ENCODE measurements at regions of chr9 and their contacts with region 1.

Region 1: GRCh38 chr9:105157130-105157583 is 87.3 kb upstream of the SLC44A1 start:
- DNase-seq: peak; percentile 95
- H3K4me3 ChIP-seq: no peak overlapping the region
- H3K27ac ChIP-seq: peak overlapping the region; percentile 56 to 79 (median 70)
- H3K4me1 ChIP-seq: peaks cover 0 to 18% (median 16%) of the 10 kb centered on the region in 4 donors
- H3K27me3 ChIP-seq: no peaks in the 10 kb centered on the region
- CTCF ChIP-seq: peak in 3 of 4 experiments; percentile 36 to 58 (median 36)
- EP300 ChIP-seq: peak; percentile 27 to 93 (median 83)
- POLR2A ChIP-seq: no peak

Region 2: GRCh38 chr9:104863180-104863883 is 293.8 kb before region 1 on chr9:
- intact Hi-C with region 1: loop called (anchors 5 kb)
- DNase-seq: no peak
- H3K4me3 ChIP-seq: no peak overlapping the region
- H3K27ac ChIP-seq: peak overlapping the region; percentile 8 to 79 (median 67)
- H3K4me1 ChIP-seq: peaks cover 0 to 79% (median 75%) of the 10 kb centered on the region in 4 donors
- H3K27me3 ChIP-seq: no peaks in the 10 kb centered on the region
- CTCF ChIP-seq: peak in 3 of 4 experiments; percentile 62 to 70 (median 67)
- EP300 ChIP-seq: no peak
- POLR2A ChIP-seq: no peak

Region 3: GRCh38 chr9:104873486-104873850 is 283.7 kb before region 1 on chr9:
- intact Hi-C with region 1: no loop called
- DNase-seq: no peak
- H3K4me3 ChIP-seq: no peak overlapping the region
- H3K27ac ChIP-seq: peak overlapping the region; percentile 65 to 85 (median 80)
- H3K4me1 ChIP-seq: peaks cover 0 to 83% (median 81%) of the 10 kb centered on the region in 4 donors
- H3K27me3 ChIP-seq: no peaks in the 10 kb centered on the region
- CTCF ChIP-seq: no peak
- EP300 ChIP-seq: no peak
- POLR2A ChIP-seq: no peak

Region 4: DNA sequence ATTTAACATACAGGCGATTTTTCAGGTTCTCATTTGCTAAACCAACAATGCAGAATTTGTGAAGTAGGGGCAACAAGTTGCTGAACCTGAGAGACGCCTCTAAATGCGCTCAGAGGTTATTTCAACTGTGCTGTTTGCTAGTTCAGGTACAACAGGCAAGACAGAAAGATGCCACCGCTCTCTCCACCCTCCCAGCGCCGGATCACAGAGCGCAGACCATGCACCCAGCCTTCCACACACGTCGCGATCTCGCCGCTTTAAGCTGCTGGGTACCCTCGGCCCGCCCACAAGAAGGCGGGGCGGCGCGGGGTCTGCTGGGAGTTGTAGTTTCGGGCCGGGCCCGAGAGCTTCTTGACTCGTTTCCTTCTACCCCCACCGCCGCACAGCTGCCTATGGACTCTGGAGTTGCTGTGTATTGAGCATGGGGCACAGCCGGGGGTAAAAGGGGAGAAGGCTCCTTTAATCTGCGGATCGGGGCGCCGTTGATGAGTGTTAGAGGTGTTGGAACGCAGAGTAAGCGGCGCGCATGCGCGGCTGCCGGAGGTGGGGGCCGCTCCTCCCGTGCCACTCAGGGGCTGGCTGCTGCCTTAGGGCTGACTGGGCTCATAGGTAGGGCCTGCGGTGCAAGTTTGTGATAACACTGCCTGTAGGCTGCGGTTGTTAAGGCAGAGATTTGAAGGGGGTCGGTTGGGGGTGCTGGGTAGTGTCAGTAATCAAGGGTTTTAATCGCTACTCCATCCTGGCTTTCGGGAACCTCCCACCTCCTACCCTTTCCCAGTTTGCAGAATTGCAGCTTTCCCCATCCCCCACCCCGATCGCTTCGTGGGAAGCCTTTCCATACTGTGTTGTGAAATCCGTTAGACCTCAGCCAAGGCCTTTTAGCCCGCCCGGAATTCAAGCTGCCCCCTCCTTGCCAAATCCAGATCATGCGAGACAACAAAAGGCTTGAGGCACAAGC is 188.9 kb before region 1 on chr9:
- intact Hi-C with region 1: loop called (anchors 2 kb)
- DNase-seq: peak; percentile 97
- H3K4me3 ChIP-seq: peak overlapping the region; percentile 46 to 74 (median 64)
- H3K27ac ChIP-seq: peak overlapping the region; percentile 85 to 98 (median 94)
- H3K4me1 ChIP-seq: peaks cover 0 to 40% (median 30%) of the 10 kb centered on the region in 4 donors
- H3K27me3 ChIP-seq: no peaks in the 10 kb centered on the region
- CTCF ChIP-seq: no peak
- EP300 ChIP-seq: peak in 3 of 4 donors; percentile 39 to 82 (median 43)
- POLR2A ChIP-seq: peak; percentile 50 to 54

Region 5: DNA sequence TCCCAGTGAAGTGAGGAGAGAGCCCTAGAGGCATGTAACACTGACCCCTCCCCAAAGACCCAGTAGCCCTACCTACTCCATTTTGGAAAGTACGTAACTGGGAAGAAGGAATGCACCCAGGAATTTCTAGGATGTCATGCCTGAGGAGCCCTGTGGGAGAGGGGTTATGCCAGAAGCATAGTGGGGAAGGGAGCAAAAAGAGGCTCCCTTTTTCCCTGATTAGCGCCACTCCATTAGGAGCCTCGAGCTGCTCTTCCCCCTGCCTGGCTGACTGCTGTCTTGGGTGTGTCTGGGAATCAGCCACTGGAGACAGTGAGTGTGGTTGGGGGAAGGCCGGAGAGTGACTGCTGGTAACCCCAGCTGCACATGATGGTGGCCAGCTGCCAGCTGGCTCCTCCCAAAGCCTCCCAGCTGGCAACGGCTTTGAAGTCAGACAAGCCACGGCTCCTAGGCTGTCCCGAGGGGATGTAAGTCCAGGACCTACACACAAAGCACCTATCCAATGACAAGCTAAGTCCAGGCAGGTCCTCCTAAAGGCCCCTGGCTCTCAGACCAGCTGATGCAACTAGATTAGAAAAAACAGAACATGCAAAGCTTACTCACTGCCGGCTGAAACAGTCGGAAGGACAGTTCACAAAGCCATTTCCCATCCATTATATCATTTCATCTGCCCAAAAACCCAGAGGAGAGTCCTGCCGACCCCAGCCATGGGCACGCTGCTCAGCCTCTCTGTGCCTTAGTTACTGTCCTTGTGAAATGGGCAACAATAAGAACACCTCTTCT is 92.7 kb before region 1 on chr9:
- intact Hi-C with region 1: loop called (anchors 2 kb)
- DNase-seq: peak; percentile 99
- H3K4me3 ChIP-seq: no peak overlapping the region
- H3K27ac ChIP-seq: peak overlapping the region; percentile 83 to 87 (median 87)
- H3K4me1 ChIP-seq: peaks cover 0 to 38% (median 26%) of the 10 kb centered on the region in 4 donors
- H3K27me3 ChIP-seq: no peaks in the 10 kb centered on the region
- CTCF ChIP-seq: no peak
- EP300 ChIP-seq: peak; percentile 68 to 89 (median 86)
- POLR2A ChIP-seq: peak; percentile 24 to 47

Region 6: DNA sequence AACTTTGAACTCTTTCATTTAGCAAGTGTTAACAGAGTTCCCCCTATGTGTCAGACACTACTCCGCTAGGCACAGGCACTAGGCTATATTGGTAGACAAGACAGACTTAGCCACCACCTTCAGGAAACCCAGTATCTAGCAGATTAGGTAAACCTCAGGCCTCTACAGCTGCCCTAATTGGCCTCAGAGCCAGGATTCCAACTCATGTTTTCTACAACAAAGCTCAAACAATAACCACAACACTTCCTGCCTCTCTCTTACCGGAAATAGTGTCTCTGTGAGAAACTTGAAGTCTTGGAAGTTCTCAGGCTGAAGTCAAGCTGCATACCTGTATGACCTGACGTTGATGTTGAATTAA is 29.3 kb before region 1 on chr9:
- intact Hi-C with region 1: no loop called
- DNase-seq: no peak
- H3K4me3 ChIP-seq: no peak overlapping the region
- H3K27ac ChIP-seq: no peak overlapping the region
- H3K4me1 ChIP-seq: peaks cover 0 to 15% (median 7%) of the 10 kb centered on the region in 4 donors
- H3K27me3 ChIP-seq: no peaks in the 10 kb centered on the region
- CTCF ChIP-seq: no peak
- EP300 ChIP-seq: no peak
- POLR2A ChIP-seq: no peak

Region 7: GRCh38 chr9:105392531-105392930 is 235.4 kb after region 1 on chr9:
- intact Hi-C with region 1: no loop called
- DNase-seq: no peak
- H3K4me3 ChIP-seq: no peak overlapping the region
- H3K27ac ChIP-seq: no peak overlapping the region
- H3K4me1 ChIP-seq: no peaks in the 10 kb centered on the region
- H3K27me3 ChIP-seq: no peaks in the 10 kb centered on the region
- CTCF ChIP-seq: no peak
- EP300 ChIP-seq: no peak
- POLR2A ChIP-seq: no peak

Region 8: GRCh38 chr9:105414947-105415661 is 257.9 kb after region 1 on chr9:
- intact Hi-C with region 1: loop called (anchors 5 kb)
- DNase-seq: peak; percentile 75
- H3K4me3 ChIP-seq: no peak overlapping the region
- H3K27ac ChIP-seq: no peak overlapping the region
- H3K4me1 ChIP-seq: peaks cover 0 to 7% (median 4%) of the 10 kb centered on the region in 4 donors
- H3K27me3 ChIP-seq: no peaks in the 10 kb centered on the region
- CTCF ChIP-seq: peak; percentile 70 to 90 (median 87)
- EP300 ChIP-seq: no peak
- POLR2A ChIP-seq: no peak